Body of pancreas (tissue), 4 donors: ENCODE measurements at regions of chr9 and their contacts with region 1.

Region 1: GRCh38 chr9:136858844-136859757 is 7.0 kb downstream of the MAMDC4 start:
- DNase-seq: peak; percentile 90 to 97 (median 93)
- ATAC-seq: peak; percentile 79
- H3K4me3 ChIP-seq: no peak overlapping the region
- H3K27ac ChIP-seq: peak overlapping the region; percentile 74 to 86 (median 78)
- H3K4me1 ChIP-seq: peaks cover 72% of the 10 kb centered on the region
- H3K27me3 ChIP-seq: no peaks in the 10 kb centered on the region
- CTCF ChIP-seq: no peak
- POLR2A ChIP-seq: peak in 1 of 3 donors; percentile 9

Region 2: GRCh38 chr9:135490980-135491464 is 1368.1 kb before region 1 on chr9:
- intact Hi-C with region 1: no loop called
- DNase-seq: no peak
- ATAC-seq: no peak
- H3K4me3 ChIP-seq: no peak overlapping the region
- H3K27ac ChIP-seq: no peak overlapping the region
- H3K4me1 ChIP-seq: no peaks in the 10 kb centered on the region
- H3K27me3 ChIP-seq: no peaks in the 10 kb centered on the region
- CTCF ChIP-seq: no peak
- POLR2A ChIP-seq: no peak

Region 3: GRCh38 chr9:136895768-136896426 is 36.8 kb after region 1 on chr9:
- intact Hi-C with region 1: no loop called
- DNase-seq: no peak
- ATAC-seq: no peak
- H3K4me3 ChIP-seq: no peak overlapping the region
- H3K27ac ChIP-seq: no peak overlapping the region
- H3K4me1 ChIP-seq: peaks cover 24% of the 10 kb centered on the region
- H3K27me3 ChIP-seq: no peaks in the 10 kb centered on the region
- CTCF ChIP-seq: no peak
- POLR2A ChIP-seq: no peak

Region 4: DNA sequence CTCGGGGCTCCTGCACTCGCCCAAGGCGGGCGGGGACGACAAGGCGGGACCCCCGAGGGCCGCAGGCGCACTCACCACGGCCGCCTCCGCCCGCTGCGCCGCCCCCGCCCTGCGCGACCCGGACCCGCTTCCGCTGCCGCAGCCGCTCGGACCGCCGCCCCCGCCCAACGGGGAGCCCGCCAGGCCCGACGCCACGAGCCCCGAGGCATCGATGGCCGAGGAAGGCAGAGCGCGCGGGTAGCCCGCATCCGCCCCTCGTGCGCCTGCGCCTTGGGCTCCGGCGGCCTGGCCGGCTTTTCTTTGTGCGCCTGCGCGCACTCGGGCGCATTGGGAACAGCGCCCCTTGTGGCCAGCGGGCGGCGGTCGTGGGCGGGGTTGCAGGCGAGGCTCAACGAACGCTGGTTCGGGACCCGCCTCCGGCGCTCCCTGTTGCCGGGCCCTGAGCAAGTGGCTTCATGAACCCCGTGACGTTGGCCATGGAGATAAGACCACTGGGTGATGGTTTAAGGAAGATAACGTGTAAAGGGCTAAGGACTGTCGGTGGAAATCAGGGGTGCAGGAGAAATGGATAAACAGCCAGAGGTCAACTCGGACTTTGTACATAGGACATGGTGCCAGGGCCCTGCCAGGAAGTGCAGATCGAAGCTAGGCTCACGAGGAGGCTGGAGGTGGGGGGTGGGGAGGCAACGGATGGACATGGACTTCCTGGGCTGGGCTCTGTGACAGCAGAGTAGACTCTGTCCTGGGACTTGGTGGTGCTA is 85.6 kb after region 1 on chr9 and contains the starts of genes C8G and FBXW5:
- intact Hi-C with region 1: loop called (anchors 10 kb)
- DNase-seq: peak; percentile 94 to 96 (median 94)
- ATAC-seq: peak; percentile 92
- H3K4me3 ChIP-seq: peak within 1 kb of the TSS; percentile 46 to 78
- H3K27ac ChIP-seq: peak within 1 kb of the TSS; percentile 55 to 93 (median 76)
- H3K4me1 ChIP-seq: peaks cover 44% of the 10 kb centered on the region
- H3K27me3 ChIP-seq: no peaks in the 10 kb centered on the region
- CTCF ChIP-seq: peak; percentile 97 to 100 (median 99)
- POLR2A ChIP-seq: no peak
- total RNA-seq, gene C8G: not detected
- total RNA-seq, gene FBXW5: 156 to 161 TPM

Region 5: DNA sequence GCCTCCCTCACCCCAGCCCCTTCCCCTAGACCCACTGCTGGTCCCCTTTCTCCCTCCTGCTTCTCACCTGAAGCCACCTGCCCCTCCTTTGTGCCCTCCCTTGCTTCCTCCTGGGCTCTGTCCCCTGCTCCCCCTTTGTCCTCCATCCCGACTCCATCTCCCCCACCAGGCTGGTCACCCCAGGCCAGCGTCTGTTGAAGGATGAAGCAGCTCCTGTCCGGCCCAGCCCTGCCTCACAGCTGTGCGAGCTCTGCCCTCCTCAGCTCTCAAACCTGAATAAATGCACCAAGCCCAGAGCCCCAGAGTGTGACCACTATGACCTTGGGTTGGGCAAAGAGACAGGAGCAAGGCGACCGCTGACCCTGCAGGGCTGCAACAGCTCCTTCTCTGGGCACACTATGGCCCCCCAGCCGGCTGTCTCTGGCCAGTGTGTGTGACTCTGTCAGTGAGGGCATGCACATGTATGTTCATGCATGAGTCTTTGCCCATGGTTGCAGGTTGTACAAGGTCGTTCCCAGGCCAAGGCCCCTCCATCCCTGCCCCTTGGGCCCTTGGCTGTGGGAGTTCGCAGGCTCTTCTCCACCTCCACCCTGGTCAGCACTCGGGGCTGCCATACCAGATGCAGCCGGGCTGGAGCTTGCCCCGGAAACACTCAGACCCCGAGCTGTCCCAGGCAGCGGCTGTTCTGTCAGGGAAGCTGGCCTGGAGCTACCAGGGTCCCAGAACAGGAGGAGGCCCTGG is 96.3 kb after region 1 on chr9:
- intact Hi-C with region 1: no loop called
- DNase-seq: no peak
- ATAC-seq: no peak
- H3K4me3 ChIP-seq: no peak overlapping the region
- H3K27ac ChIP-seq: no peak overlapping the region
- H3K4me1 ChIP-seq: peaks cover 21% of the 10 kb centered on the region
- H3K27me3 ChIP-seq: no peaks in the 10 kb centered on the region
- CTCF ChIP-seq: no peak
- POLR2A ChIP-seq: no peak